ENCODE measurements at regions of chr11 and their contacts with region 1.

Region 1: GRCh38 chr11:26569646-26570045 is 2.4 kb downstream of the MUC15 start:
- DNase-seq: no peak
- H3K4me3 ChIP-seq: no peak overlapping the region
- H3K27ac ChIP-seq: no peak overlapping the region
- H3K4me1 ChIP-seq: peaks cover 4% of the 10 kb centered on the region
- H3K27me3 ChIP-seq: peaks cover 4% of the 10 kb centered on the region
- CTCF ChIP-seq: no peak

Region 2: DNA sequence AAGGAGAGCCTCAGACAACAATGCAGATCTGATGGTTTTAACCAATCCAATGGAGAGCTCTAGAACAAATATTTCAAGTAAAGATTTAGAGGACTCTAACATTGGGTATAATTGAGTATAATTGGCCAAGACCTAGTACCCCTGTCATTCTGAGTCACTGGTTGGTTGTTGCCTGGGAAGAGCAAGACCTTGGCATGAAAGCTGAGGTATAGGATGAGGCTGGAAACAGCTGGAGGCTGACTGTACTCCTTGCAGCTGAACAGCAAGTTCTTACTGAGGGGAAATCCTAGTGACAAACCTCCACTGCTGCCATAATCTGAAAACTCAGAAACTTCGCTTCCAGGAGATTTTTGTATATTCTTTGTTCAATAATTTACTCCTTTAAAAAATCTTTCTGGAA is 56.7 kb after region 1 on chr11:
- CTCF ChIA-PET with region 1: no interaction called
- dilution Hi-C with region 1: no loop called
- in situ Hi-C with region 1: no loop called
- intact Hi-C with region 1: loop called (anchors 5 kb)
- DNase-seq: peak; percentile 69
- H3K4me3 ChIP-seq: no peak overlapping the region
- H3K27ac ChIP-seq: no peak overlapping the region
- H3K4me1 ChIP-seq: peaks cover 17% of the 10 kb centered on the region
- H3K27me3 ChIP-seq: no peaks in the 10 kb centered on the region
- CTCF ChIP-seq: no peak